ENCODE measurements at regions of chr14 and their contacts with region 1.

Region 1: GRCh38 chr14:88189417-88190191 is 133.5 kb downstream of the KCNK10 start:
- DNase-seq: peak; percentile 81 to 90 (median 84)
- H3K4me3 ChIP-seq: peak overlapping the region in 4 of 7 experiments; percentile 23 to 57 (median 32)
- H3K27ac ChIP-seq: no peak overlapping the region
- H3K4me1 ChIP-seq: peaks cover 0 to 5% (median 5%) of the 10 kb centered on the region in 4 experiments
- H3K27me3 ChIP-seq: peaks cover 2 to 8% (median 5%) of the 10 kb centered on the region in 5 experiments

Region 2: DNA sequence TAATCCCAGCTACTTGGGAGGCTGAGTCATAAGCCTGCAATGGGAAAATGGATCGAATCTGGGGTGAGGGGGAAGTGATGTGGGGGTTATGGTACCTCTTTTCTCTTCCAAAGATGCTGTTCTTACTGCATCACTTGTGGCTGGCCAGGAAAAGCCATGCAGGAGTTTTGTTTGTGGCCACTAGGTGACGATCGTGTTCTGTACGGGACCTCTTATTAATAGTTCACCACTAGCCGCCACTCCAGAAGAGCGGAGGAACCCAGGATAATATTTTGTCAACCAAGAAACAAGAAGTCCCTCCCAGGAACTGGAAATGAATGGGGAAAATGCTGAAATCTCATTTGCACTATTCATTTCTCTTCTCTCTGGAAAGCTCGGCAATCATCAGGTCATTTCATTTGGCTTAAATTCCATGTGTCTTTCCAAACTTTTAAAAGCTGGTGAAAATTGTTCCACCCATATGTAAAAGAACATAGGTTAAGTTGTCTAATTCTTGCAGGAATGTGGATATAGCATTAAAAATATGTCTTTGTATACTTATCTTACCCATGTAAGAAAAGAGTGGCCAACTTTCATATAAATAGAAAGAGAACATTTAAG is 175.8 kb before region 1 on chr14:
- CTCF ChIA-PET with region 1: interaction called, 10 read pairs
- POLR2A ChIA-PET with region 1: no interaction called
- DNase-seq: peak; percentile 70 to 85 (median 81)
- H3K4me3 ChIP-seq: peak overlapping the region in 1 of 7 experiments; percentile 17
- H3K27ac ChIP-seq: no peak overlapping the region
- H3K4me1 ChIP-seq: peaks cover 0 to 3% (median 0%) of the 10 kb centered on the region in 4 experiments
- H3K27me3 ChIP-seq: no peaks in the 10 kb centered on the region

Region 3: DNA sequence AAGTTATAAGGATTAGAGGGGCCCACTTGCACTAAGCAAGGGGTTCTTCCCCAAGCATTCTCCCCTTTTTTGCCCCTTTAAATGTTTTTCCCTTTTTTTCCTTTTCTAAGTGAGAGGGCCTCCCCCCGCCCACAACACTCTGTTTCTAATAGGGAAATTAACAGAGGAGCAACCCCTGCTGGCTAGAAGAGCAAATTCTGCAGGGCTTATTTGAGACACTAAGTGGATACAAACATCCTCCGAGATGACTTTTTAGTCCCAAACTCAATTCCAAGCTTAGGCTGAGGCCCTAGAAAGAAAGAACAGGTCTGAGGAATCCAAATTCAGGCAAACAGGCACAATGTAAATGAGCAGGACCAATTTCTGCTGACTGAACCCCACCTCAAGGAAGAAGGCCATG is 45.8 kb before region 1 on chr14:
- CTCF ChIA-PET with region 1: no interaction called
- POLR2A ChIA-PET with region 1: no interaction called
- DNase-seq: no peak
- H3K4me3 ChIP-seq: no peak overlapping the region
- H3K27ac ChIP-seq: no peak overlapping the region
- H3K4me1 ChIP-seq: no peaks in the 10 kb centered on the region
- H3K27me3 ChIP-seq: peaks cover 0 to 3% (median 0%) of the 10 kb centered on the region in 5 experiments

Region 4: DNA sequence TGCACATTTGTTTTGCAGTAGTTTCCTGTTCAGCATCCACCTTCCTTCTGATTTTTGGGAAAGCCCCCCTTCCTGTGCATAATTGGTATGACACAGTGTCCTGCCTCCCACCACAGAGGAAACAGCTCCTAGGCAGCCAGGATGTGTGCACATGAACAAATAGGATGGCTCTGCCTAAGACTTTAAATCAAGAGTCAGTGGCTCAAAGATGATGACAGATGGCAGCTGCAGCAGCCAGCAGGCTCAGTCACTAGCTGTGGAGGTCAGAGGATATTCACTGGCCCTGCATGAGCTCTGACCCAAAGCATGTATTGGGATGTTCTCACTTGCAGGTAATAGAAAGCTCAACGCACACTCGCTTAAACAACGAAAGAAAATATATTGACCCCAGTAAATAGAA is 43.2 kb after region 1 on chr14:
- CTCF ChIA-PET with region 1: interaction called, 10 read pairs
- POLR2A ChIA-PET with region 1: no interaction called
- DNase-seq: peak; percentile 34 to 91 (median 91)
- H3K4me3 ChIP-seq: peak overlapping the region in 3 of 7 experiments; percentile 4 to 26 (median 11)
- H3K27ac ChIP-seq: peak overlapping the region; percentile 22 to 46
- H3K4me1 ChIP-seq: peaks cover 3 to 42% (median 16%) of the 10 kb centered on the region in 4 experiments
- H3K27me3 ChIP-seq: no peaks in the 10 kb centered on the region

Region 5: DNA sequence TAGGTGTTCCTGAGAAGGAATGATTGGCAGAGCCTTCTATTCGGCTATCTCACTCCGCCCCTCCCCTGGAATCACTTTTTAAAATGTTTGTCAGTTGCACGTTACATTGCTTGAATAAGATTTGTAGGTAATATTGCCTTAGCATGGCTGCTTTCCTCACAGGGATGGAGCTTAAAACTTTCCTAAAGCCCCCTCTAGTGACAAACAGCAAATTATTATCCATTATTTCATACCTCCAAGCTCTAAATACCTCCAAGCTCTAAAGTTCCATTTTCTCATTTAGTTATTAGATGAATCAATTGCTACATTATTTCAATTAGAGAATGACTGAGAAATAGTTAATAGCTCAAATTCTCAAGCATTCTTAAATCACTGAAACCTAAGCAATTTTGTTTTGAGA is 190.8 kb after region 1 on chr14:
- CTCF ChIA-PET with region 1: interaction called, 87 read pairs
- POLR2A ChIA-PET with region 1: no interaction called
- DNase-seq: peak; percentile 22 to 43 (median 37)
- H3K4me3 ChIP-seq: no peak overlapping the region
- H3K27ac ChIP-seq: no peak overlapping the region
- H3K4me1 ChIP-seq: peaks cover 0 to 4% (median 3%) of the 10 kb centered on the region in 4 experiments
- H3K27me3 ChIP-seq: peaks cover 0 to 2% (median 0%) of the 10 kb centered on the region in 5 experiments

Region 6: DNA sequence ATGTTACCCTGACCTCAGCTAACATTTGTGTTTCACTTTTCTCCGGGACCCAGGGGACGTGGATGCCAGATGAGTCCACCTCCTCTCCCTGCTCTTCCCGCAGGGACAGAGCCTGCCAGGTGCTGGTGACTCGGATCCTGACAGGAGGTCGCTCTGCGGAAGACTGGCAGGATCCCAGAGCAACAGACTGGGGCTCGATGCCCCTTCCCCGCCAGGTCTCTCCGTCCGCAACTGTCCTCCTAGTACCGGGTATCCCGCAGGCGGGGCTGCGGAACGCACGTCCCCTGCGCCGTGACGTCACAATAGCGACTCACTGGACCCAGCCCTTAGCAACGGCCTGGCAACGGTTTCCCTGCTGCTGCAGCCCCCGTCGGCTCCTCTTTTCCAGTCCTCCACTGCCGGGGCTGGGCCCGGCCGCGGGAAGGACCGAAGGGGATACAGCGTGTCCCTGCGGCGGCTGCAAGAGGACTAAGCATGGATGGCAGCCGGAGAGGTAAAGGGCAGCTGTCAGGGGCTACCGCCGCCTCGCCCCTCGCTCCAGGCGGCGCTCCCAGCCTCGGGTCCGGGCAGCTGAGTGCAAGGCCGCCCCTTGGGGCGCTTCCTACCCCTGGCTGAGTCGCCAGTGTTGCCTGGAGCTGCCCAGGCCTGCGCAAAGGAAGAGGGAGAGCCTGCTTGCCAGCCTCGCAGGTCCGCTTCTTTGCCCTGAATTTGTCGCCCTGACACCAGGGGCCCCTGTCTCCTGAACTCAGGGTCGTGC is 195.9 kb after region 1 on chr14 and contains the start of gene SPATA7:
- CTCF ChIA-PET with region 1: interaction called, 87 read pairs
- POLR2A ChIA-PET with region 1: no interaction called
- DNase-seq: peak; percentile 85 to 92 (median 88)
- H3K4me3 ChIP-seq: peak within 1 kb of the TSS; percentile 75 to 100 (median 98)
- H3K27ac ChIP-seq: peak within 1 kb of the TSS; percentile 55 to 88
- H3K4me1 ChIP-seq: peaks cover 2 to 13% (median 7%) of the 10 kb centered on the region in 4 experiments
- H3K27me3 ChIP-seq: peaks cover 0 to 2% (median 0%) of the 10 kb centered on the region in 5 experiments